ENCODE measurements at regions of chr1 and their contacts with region 1.

Region 1: DNA sequence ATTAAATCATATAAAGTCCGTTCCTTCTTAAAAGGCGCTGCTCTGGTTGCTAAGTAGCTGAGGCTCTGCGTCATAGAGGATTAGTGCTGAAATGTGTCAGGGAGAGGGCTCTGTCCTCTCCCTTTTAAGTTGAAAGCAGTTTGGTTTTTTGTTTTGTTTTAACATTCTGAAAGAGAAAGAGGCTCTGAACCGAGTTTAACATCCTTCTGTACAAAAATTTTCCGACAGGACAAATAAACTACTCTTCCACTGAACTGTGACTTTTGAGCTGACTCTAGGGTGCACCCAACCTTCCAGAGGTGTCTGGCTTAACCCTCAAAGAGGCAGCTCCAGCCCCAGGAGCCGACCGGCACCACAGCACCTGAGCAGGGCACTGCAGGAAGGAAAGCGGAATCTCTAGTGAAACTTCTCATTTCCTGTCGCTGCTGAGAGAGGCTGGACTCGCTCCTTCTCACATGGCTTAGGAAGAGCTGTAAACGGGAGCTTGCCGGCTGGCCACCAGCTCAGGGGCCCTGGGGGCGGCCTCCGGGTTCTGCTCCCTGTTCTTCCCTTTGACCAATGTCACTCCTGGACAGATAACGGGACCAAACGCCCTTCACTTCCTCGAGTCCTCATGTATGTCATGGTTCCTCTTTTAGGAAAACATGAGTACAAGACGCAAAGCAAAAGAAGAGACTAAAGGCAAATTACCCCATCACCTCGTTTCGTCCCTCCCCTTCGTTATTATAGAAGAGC is 1.2 kb downstream of the VAV3 start:
- DNase-seq: peak; percentile 8
- H3K4me3 ChIP-seq: peak overlapping the region in 1 of 3 experiments; percentile 41
- H3K27ac ChIP-seq: no peak overlapping the region
- H3K4me1 ChIP-seq: peaks cover 16% of the 10 kb centered on the region
- H3K27me3 ChIP-seq: peaks cover 25 to 27% of the 10 kb centered on the region in 2 experiments
- CTCF ChIP-seq: no peak
- POLR2A ChIP-seq: no peak

Region 2: DNA sequence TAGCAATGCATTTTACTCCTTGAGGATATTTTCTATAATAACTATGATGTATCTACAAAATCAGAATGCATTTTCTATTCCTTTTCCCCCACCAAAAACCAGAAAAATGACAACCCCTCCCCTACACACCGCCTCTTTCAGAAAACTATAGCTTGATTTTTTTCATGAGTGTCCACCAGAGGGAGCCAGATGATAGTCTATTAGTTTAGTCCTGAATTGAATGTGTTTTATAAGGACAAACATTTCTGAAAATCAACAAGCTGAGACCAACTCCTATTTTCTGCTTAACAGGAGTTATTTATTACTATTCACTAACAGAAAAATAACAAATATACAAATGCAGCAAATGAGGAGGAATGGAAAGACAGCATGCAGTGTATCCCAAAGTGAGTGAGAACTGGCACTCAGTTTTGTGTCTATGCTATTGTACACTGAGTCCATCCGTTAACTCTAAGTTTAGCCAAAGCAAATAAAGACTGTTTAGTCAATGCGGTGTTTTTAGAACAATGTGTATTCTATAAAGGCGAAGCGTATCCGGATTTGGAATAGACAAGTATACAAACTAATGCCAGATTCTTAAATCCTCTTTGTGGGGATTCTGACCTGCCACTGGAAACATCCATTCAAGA is 181.4 kb before region 1 on chr1:
- CTCF ChIA-PET with region 1: interaction called, 28 read pairs
- POLR2A ChIA-PET with region 1: no interaction called
- dilution Hi-C with region 1: no loop called
- intact Hi-C with region 1: loop called (anchors 1 kb)
- DNase-seq: peak; percentile 71
- H3K4me3 ChIP-seq: no peak overlapping the region
- H3K27ac ChIP-seq: no peak overlapping the region
- H3K4me1 ChIP-seq: peaks cover 6% of the 10 kb centered on the region
- H3K27me3 ChIP-seq: no peaks in the 10 kb centered on the region
- CTCF ChIP-seq: peak; percentile 17 to 41
- POLR2A ChIP-seq: no peak

Region 3: DNA sequence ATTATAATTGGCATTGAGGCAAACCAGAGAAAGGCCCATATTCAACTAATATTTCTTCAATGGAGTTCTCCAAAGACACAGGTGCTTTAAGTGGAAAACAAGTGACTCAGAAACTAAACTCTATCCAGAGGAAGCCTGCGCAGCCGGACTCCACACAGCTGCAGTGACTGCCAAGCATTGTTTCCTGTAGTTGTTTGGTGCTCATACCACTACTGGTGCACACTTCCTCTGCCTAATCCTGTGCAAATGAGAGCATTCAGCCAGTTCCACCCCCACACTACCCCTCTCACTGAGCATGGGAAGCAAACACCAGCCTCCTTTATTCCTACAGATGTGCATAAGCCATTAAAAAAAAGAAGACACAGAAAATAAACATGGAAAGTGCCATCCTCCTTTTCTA is 101.7 kb before region 1 on chr1:
- CTCF ChIA-PET with region 1: no interaction called
- POLR2A ChIA-PET with region 1: no interaction called
- dilution Hi-C with region 1: no loop called
- intact Hi-C with region 1: loop called (anchors 1 kb)
- DNase-seq: peak; percentile 95
- H3K4me3 ChIP-seq: no peak overlapping the region
- H3K27ac ChIP-seq: no peak overlapping the region
- H3K4me1 ChIP-seq: peaks cover 15% of the 10 kb centered on the region
- H3K27me3 ChIP-seq: no peaks in the 10 kb centered on the region
- CTCF ChIP-seq: no peak
- POLR2A ChIP-seq: no peak

Region 4: GRCh38 chr1:107942814-107943213 is 21.0 kb before region 1 on chr1:
- CTCF ChIA-PET with region 1: no interaction called
- POLR2A ChIA-PET with region 1: no interaction called
- dilution Hi-C with region 1: no loop called
- intact Hi-C with region 1: no loop called
- DNase-seq: no peak
- H3K4me3 ChIP-seq: no peak overlapping the region
- H3K27ac ChIP-seq: no peak overlapping the region
- H3K4me1 ChIP-seq: peaks cover 1% of the 10 kb centered on the region
- H3K27me3 ChIP-seq: no peaks in the 10 kb centered on the region
- CTCF ChIP-seq: no peak
- POLR2A ChIP-seq: no peak

Region 5: GRCh38 chr1:107952989-107953388 is 10.8 kb before region 1 on chr1:
- CTCF ChIA-PET with region 1: no interaction called
- POLR2A ChIA-PET with region 1: no interaction called
- dilution Hi-C with region 1: no loop called
- intact Hi-C with region 1: loop called (anchors 1 kb)
- DNase-seq: peak; percentile 46
- H3K4me3 ChIP-seq: no peak overlapping the region
- H3K27ac ChIP-seq: no peak overlapping the region
- H3K4me1 ChIP-seq: peaks cover 13% of the 10 kb centered on the region
- H3K27me3 ChIP-seq: peaks cover 5 to 11% of the 10 kb centered on the region in 2 experiments
- CTCF ChIP-seq: no peak
- POLR2A ChIP-seq: no peak

Region 6: GRCh38 chr1:108034406-108034805 is 70.6 kb after region 1 on chr1:
- CTCF ChIA-PET with region 1: no interaction called
- POLR2A ChIA-PET with region 1: no interaction called
- dilution Hi-C with region 1: no loop called
- intact Hi-C with region 1: no loop called
- DNase-seq: no peak
- H3K4me3 ChIP-seq: no peak overlapping the region
- H3K27ac ChIP-seq: no peak overlapping the region
- H3K4me1 ChIP-seq: no peaks in the 10 kb centered on the region
- H3K27me3 ChIP-seq: no peaks in the 10 kb centered on the region
- CTCF ChIP-seq: no peak
- POLR2A ChIP-seq: no peak

Region 7: GRCh38 chr1:108125312-108126138 is 161.8 kb after region 1 on chr1:
- CTCF ChIA-PET with region 1: interaction called, 8 read pairs
- POLR2A ChIA-PET with region 1: no interaction called
- dilution Hi-C with region 1: no loop called
- intact Hi-C with region 1: loop called (anchors 2 kb)
- DNase-seq: peak; percentile 78
- H3K4me3 ChIP-seq: no peak overlapping the region
- H3K27ac ChIP-seq: no peak overlapping the region
- H3K4me1 ChIP-seq: no peaks in the 10 kb centered on the region
- H3K27me3 ChIP-seq: no peaks in the 10 kb centered on the region
- CTCF ChIP-seq: peak; percentile 86
- POLR2A ChIP-seq: no peak